OCI-LY7 (cell line): ENCODE measurements at regions of chr22 and their contacts with region 1.

Region 1: DNA sequence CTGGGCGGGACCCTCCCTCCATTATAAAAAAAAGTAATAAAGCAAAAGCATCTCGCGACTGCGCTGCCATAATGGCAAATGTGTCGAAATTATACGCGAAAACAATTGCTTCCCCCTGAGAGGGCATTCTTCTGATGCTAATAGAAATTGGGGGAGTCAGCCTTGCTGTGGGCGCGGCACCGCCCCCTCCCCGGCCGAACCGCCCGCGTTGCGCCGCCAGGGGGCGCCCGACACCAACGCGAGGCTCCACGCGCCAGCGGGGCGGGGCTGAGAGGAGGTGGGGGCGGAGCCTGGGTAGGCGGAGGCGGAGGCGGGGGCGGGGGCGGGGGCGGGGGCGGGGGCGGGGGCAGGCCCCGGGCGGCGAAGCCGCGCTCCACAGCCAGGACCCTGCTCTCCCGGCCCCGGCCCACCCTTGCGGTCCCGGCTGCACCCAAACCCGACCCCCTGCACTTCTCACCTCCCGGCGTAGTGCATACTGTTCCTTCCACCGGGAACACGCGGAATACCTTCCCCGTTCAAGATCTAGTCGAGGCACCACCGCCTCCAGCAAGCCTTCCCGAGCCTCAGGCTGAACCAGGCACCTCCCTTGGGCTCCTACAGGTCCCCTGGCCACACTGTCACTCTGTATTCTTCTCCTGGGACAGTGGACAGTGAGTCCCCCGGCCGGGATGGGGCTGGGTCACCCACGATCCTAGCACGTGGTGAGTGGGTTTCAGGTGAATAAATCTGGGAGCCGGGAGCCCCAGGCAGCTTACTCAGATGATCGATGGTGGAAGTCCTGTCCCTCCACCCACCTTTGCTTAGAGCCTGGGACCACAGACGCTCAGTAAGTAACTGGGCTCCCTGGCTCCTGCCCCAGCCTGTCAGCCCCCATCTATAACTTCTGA is 15.5 kb upstream of the UPK3A start:
- DNase-seq: peak; percentile 88
- H3K4me3 ChIP-seq: peak overlapping the region; percentile 58
- H3K27ac ChIP-seq: no peak overlapping the region
- H3K4me1 ChIP-seq: peaks cover 25% of the 10 kb centered on the region
- CTCF ChIP-seq: peak; percentile 82

Region 2: DNA sequence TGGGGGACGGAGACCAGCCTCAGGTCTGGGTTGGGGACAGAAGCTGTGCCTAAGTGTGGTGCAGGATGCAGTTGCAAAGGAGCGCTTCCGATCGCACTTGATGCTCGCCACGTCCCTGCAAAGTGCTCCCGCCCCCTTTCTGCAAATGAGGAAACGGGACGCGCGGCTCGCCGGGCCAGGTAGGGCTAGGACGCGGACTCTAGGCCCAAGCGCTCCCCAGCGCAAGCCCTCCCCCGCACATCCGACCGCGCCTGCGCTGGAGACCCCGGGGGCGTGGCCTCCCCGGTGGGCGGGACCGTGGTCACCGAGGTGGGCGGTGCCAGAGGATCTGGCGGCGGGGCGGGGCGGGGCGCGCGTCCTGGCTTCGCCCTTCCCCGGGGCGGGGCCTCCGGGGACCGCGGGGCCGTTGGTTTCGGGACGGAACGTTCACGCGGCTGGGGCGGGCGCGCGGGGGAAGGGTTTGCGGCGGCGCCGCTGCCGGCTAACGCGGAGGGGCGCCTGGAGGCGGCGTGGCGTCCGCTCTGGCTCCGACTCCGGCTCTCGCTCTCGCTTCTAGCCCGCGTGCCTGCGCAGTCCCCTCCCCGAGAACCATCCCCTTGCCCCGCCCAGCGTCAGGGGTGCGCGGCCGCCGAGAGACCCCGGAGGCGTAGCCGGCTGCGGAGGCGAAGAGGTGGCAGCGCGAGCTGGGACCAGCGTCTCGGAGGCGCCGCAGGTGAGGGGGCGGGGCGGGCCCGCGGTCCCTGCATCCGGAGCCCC is 40.4 kb after region 1 on chr22 and contains the start of gene FAM118A:
- CTCF ChIA-PET with region 1: no interaction called
- POLR2A ChIA-PET with region 1: no interaction called
- intact Hi-C with region 1: loop called (anchors 2 kb)
- DNase-seq: peak; percentile 95
- H3K4me3 ChIP-seq: peak within 1 kb of the TSS; percentile 99
- H3K27ac ChIP-seq: peak within 1 kb of the TSS; percentile 59
- H3K4me1 ChIP-seq: peaks cover 22% of the 10 kb centered on the region
- CTCF ChIP-seq: no peak
- total RNA-seq, gene FAM118A: 15.9 and 27.6 TPM in 2 replicates

Region 3: DNA sequence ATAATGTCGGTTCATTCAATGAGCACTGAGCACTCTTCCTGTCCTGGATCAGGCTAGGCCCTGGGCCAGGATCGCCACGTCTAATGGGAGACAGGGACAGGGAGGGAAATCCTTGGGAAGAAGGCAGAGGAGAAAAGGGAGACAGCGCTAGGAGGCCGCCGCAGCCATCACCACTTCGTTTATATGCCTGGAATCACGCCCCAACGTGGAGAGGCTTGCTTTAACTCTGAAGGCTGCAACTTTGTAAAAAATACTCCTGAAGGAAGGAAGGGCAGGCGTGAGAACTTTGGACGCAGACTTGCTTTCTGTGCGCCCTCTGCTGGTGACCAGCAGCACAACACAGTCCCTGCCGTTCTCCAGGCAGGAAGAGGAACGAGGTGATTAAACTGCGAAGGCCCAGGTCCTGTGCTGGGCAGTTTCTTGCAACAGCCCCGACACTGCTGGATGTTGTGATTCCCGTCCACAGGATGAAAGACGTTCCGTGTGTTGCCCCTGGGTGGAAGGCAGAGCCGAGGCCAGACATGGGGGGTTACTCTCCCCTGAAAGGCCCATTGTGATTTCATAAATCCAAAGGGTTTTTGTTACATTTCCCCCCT is 166.4 kb after region 1 on chr22:
- CTCF ChIA-PET with region 1: no interaction called
- POLR2A ChIA-PET with region 1: no interaction called
- intact Hi-C with region 1: loop called (anchors 1 kb)
- DNase-seq: peak; percentile 83
- H3K4me3 ChIP-seq: no peak overlapping the region
- H3K27ac ChIP-seq: no peak overlapping the region
- H3K4me1 ChIP-seq: no peaks in the 10 kb centered on the region
- CTCF ChIP-seq: peak; percentile 91

Region 4: DNA sequence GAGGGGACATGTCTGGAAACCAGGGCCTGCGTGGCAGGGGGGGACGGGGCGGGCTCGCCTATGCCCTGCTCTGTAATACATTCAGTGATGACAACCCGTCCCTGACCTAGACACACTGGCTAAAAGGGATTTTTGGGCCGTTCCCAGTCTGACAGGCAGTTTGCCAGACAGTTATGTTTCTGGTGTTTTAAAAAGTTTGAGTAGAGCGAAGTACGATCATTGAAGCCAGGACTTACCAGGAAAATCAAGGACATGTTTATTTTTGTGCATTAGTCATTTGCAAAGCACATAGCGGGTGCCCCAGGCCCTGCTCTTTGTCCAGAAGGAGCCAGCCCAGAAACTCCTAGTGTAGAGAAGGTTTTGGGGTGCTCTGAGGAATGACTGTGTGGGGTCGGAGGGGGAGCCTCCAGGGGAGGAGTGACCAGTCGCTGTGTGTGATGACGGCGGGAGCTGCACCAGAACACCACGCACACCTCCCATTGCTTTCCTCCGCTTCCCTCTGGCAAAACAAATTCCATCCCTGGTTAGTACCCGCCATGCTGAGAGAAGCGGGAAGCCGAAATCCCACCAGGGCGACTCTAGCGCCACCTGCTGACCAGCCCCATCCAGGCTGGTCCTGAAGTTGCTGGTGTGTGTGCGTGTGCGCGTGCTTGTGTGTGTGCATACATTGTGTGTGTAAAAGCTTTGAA is 284.3 kb after region 1 on chr22:
- CTCF ChIA-PET with region 1: no interaction called
- POLR2A ChIA-PET with region 1: no interaction called
- intact Hi-C with region 1: loop called (anchors 5 kb)
- DNase-seq: peak; percentile 62
- H3K4me3 ChIP-seq: no peak overlapping the region
- H3K27ac ChIP-seq: no peak overlapping the region
- H3K4me1 ChIP-seq: no peaks in the 10 kb centered on the region
- CTCF ChIP-seq: peak; percentile 92